Gastrocnemius medialis (tissue), 4 donors: ENCODE measurements at regions of chr7 and their contacts with region 1.

Region 1: GRCh38 chr7:24401628-24402593 is 117.9 kb downstream of the NPY start:
- DNase-seq: no peak
- ATAC-seq: peak; percentile 58 to 70
- H3K4me3 ChIP-seq: peak overlapping the region in 3 of 4 donors; percentile 17 to 39 (median 27)
- H3K27ac ChIP-seq: no peak overlapping the region
- H3K4me1 ChIP-seq: no peaks in the 10 kb centered on the region
- H3K27me3 ChIP-seq: no peaks in the 10 kb centered on the region
- CTCF ChIP-seq: peak in 3 of 5 experiments; percentile 27 to 41 (median 41)
- POLR2A ChIP-seq: no peak

Region 2: GRCh38 chr7:24587848-24588247 is 185.9 kb after region 1 on chr7:
- in situ Hi-C with region 1: no loop called
- intact Hi-C with region 1: loop called (anchors 5 kb)
- DNase-seq: no peak
- ATAC-seq: no peak
- H3K4me3 ChIP-seq: no peak overlapping the region
- H3K27ac ChIP-seq: no peak overlapping the region
- H3K4me1 ChIP-seq: peaks cover 0 to 15% of the 10 kb centered on the region in 2 donors
- H3K27me3 ChIP-seq: no peaks in the 10 kb centered on the region
- CTCF ChIP-seq: peak in 3 of 5 experiments; percentile 41 to 59 (median 45)
- POLR2A ChIP-seq: no peak